GM10248 (cell line): ENCODE measurements at regions of chr6 and their contacts with region 1.

Region 1: DNA sequence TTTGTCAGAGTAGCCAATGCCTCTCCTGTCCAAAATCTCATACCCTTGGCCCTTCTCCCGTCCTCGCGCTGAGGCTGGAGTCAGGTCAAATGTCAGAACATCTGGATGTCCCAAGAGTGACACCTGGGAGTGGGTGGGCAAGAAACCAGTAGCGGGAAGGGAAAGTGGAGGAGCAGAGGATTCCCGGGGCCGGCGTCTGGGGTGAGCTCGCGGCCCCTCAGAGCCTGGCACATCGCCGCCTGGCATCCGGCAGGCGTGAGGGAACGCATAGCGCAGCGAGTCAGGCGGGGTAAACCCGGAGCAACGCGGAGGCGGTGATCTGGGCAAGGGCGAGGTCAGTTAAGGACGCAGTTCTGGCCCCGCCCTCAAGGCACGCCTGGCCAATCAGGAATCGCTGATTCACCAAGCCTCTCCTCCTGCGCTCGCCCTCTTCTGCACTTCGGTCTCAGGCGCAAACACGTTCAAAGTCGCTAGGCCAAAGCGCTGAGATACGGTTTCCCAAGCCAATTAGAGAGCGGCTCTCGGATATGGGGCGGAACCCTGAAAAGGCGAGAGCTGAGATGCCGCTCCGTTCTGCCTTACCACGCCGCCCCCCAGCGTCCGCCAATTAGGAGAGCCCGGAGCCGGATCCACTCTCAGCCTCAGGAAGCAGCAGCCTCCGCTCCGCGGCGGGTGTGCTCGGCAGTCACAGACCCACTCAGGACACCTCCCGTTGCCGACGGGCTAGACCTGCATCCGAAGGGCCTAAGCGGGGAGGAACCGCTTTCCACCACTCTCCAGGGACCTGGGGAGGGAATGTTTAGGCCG is 22.5 kb downstream of the VPS52 start:
- DNase-seq: peak; percentile 95
- CTCF ChIP-seq: no peak

Region 2: DNA sequence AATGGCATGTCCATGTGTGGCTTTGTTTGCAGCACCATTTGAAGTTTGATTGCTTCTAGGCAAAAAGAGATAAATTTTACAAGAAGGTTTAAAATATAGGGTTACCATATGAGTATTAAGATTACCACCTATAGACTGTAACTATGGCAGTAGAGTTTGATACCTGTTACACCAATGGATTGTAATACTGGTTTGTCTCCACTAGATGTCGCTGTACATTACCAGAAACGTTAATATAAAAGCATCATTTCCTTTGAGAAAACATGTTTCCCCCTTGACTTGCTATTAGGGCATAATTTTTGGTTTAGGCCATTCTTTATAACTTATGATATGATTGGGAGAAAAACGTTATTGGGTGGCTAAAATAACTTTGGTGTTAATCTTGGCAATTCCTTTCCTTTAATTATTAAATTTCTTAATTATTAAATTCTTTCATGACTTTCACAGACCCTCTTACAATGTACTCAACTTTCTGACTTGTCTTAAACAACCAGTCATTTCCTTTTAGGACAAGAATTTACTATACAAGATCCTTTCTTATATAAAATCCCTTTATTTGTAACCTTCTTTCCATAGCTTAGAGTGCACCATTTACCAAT is 130.5 kb before region 1 on chr6:
- CTCF ChIA-PET with region 1: interaction called, 49 read pairs
- POLR2A ChIA-PET with region 1: no interaction called
- DNase-seq: peak; percentile 45
- CTCF ChIP-seq: peak; percentile 67

Region 3: DNA sequence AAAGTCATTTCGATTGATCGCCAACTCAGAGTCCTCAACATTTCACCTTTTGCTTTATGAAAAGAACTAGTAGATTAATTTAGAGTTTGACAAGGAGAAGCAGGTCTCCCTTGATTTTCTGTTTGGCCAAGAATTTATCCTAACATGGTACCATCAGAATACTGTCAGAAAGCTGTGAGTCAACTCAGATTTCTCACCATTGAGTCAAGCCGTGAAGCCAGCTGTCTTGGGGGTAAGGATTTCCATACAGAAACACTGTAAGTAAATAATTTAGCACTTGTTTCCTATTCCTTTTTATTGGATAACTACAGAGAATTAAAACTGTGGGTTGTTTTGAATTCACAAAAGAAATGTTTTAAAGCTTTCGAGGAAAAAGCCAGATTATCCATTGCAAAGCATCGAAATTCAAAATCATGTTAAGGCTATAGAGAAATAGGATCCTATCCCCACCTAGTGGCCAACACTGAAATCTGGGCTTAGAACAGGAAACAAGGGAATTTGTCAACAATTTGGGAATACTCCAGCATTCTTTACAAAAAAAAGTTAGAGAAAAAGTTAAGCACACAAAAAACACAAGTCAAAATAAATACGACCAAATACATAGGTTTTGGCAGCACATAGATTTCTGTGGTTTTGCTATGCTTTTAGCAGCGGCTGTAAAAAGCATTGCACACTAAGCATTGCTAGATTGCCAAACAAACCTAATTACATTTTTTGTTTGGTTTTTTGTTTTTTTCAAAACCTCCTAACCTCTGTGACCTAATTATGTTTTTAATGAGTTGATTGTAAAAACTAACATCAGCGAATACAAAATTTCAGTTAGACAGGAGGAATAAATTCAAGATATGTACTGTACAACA is 101.1 kb before region 1 on chr6:
- CTCF ChIA-PET with region 1: interaction called, 17 read pairs
- POLR2A ChIA-PET with region 1: no interaction called
- DNase-seq: peak; percentile 39
- CTCF ChIP-seq: peak; percentile 77

Region 4: DNA sequence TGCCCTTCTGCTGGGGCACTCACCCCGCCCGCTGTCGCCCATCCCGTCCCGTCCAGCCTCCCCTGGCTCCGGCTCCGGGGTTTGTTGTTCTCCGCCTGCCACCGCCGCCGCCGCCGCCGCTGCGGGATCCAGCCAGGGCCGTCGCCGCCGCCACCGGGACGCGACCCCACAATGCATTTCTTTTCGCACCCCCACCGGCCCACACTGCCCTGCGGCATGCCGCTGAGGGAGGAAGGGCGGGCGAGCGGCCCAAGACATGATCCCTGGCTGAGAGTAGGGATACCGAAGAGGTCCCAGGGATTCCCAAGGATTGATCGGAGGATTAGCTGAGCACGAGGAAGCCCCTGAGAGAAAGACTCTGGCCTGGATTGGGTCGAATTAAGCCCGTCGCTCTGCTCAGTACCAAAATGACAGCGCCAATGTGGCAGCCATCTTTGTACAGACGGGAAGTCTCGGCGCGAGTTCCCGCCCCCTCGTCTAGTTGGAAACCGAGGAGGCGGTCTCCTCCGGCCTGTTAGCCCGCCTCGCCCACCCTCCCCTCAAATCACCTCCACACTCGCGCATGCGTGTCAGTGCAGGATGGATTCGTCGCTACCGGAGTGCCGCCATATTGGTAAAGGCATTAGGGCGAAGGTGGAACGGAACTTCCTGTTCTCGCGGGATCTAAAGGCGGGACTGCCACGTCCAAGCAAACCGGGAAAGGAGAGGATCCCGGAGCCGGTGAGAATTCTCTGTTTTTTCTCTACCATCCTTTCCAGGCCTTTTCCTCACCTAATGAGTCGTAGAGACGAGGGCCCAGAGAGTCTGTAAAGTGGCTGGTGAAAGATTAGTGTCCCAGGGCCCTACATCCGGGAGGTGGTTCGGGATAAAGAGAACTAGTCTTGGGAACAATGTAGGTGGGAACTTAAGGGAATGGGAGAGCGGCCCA is 48.6 kb before region 1 on chr6 and contains the starts of genes RXRB and SLC39A7:
- CTCF ChIA-PET with region 1: interaction called, 16 read pairs
- POLR2A ChIA-PET with region 1: no interaction called
- DNase-seq: peak; percentile 98
- CTCF ChIP-seq: no peak

Region 5: GRCh38 chr6:33264015-33264414 is 14.9 kb after region 1 on chr6:
- CTCF ChIA-PET with region 1: interaction called, 81 read pairs
- POLR2A ChIA-PET with region 1: interaction called, 12 read pairs
- DNase-seq: no peak
- CTCF ChIP-seq: no peak

Region 6: DNA sequence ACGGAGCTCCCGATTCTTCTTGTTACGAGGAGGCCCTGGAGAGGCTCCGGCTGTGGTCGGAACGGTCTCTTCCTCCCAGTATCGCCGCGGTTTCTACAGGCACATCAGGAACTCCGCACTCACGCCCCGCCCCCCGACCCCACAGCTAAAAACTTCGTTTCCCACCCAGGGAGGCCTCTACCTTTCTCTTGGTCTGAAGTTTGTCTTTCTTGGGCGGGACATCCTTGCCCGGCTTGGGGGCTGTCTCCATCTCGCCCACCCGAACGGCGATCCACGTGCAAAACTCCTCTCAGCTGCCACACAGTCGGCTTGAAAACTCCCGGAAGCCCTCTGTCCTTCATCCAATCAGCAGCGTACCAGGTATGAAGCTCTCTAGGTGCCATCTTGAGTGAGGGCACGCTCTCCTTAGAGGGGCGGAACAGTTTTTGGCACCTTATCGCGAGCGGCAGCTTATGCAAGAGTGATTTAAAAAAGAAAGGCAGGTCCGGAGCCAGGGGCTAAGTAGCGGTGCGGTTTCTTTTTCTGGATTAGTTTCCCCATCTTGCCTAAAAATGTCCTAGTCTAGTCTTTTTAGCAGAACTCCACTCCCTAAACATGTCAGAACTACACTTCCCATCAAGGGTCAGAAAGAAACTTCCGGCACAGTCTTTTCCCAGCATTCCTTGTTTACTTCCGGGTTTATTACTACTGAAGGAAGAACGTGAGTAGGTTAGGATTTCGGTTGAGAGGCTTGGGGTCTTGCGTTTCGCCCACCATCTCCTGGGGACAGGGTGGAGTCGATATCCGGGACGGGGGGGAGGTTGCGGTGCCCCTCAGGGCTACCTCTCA is 40.0 kb after region 1 on chr6 and contains the starts of genes PFDN6 and WDR46:
- CTCF ChIA-PET with region 1: interaction called, 11 read pairs
- POLR2A ChIA-PET with region 1: interaction called, 3 read pairs
- DNase-seq: peak; percentile 94
- CTCF ChIP-seq: no peak